SK-N-SH (cell line): ENCODE measurements at regions of chr17 and their contacts with region 1.

Region 1: DNA sequence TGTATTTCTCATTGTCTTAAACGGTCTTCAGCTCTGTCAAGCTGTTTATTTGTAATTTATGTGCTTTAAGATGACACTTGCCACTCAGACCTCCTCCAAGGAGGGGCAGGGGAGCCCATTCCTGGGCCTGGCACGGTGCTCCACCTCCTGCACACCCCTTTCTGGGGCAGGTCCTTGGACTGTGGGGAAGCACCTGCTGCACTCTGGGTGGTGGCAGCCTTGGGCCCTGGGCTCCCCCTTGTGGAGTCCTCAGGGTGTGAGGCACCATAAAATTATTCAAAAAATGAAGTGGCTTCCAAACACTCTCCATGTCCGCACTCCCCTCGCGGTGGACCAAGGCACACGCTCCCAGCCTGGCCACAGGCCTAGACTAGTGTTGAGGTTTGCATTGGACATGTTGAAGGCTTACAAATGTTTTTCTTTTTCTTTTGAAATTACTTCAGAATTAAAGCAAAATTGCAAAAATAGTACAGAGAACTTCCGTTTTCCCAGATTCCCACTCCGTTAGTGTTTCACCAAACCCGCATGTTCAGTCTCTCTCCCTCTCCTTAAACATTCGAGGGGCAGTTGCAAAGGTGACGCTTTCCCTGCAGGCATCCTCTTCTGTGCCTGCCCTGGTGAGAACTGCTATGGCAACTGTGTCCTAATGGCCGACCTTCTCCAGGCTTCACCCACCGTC is 32.4 kb downstream of the FOXK2 start:
- DNase-seq: peak; percentile 85
- H3K4me3 ChIP-seq: no peak overlapping the region
- H3K27ac ChIP-seq: no peak overlapping the region
- H3K4me1 ChIP-seq: peaks cover 14 to 19% of the 10 kb centered on the region in 2 experiments; a peak in 3 of 4 replicates
- H3K27me3 ChIP-seq: no peaks in the 10 kb centered on the region
- CTCF ChIP-seq: peak; percentile 76
- EP300 ChIP-seq: no peak
- RAD21 ChIP-seq: peak; percentile 77

Region 2: GRCh38 chr17:82494236-82495055 is 57.5 kb before region 1 on chr17:
- CTCF ChIA-PET with region 1: interaction called, 29 read pairs
- POLR2A ChIA-PET with region 1: no interaction called
- DNase-seq: peak; percentile 94
- H3K4me3 ChIP-seq: peak overlapping the region; percentile 22 to 57
- H3K27ac ChIP-seq: peak overlapping the region; percentile 50 to 76
- H3K4me1 ChIP-seq: peaks cover 8 to 21% of the 10 kb centered on the region in 2 experiments; a peak in 2 of 4 replicates
- H3K27me3 ChIP-seq: no peaks in the 10 kb centered on the region
- CTCF ChIP-seq: peak; percentile 100
- EP300 ChIP-seq: peak in 1 of 2 experiments; percentile 64; a peak in 1 of 4 replicates
- RAD21 ChIP-seq: peak; percentile 50

Region 3: GRCh38 chr17:82528484-82529265 is 23.2 kb before region 1 on chr17:
- CTCF ChIA-PET with region 1: interaction called, 35 read pairs
- POLR2A ChIA-PET with region 1: no interaction called
- DNase-seq: peak; percentile 88
- H3K4me3 ChIP-seq: no peak overlapping the region
- H3K27ac ChIP-seq: peak overlapping the region; percentile 47 to 63
- H3K4me1 ChIP-seq: peaks cover 25 to 34% of the 10 kb centered on the region in 2 experiments
- H3K27me3 ChIP-seq: no peaks in the 10 kb centered on the region
- CTCF ChIP-seq: peak; percentile 88
- EP300 ChIP-seq: no peak
- RAD21 ChIP-seq: peak; percentile 93

Region 4: DNA sequence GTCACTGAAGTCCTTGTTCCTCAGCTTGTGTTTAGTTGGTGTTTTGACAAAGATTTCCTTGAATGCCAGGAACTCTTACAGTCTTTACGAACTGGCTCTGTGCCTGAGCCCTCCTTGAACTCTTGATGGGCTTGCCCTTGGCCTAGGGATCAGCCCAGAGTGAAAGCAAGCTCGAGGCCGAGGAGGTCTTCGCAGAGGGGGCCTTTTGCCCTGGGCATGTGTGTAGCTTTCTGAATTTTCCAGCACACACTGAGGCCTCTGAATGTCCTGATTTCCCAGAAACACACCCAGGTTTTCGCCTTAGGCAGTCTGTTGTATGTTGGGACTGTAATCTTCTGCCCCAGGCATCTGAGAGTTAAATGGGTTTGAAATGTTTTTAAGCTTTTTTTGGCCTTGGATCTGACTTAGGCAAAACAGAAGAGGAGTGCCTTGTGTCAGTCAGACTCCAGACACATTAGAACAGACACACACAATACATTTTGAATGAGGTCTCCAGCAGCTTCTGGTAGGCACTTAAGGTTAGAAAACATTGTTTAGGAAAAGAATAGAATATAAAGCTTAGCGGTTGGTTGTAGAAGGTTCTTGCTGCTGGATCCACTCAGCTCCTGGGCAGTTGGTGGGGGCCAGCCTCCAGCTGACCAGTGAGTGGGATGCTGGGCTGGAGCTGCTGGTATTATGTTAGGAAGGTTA is 15.3 kb before region 1 on chr17:
- CTCF ChIA-PET with region 1: interaction called, 95 read pairs
- POLR2A ChIA-PET with region 1: no interaction called
- DNase-seq: peak; percentile 54
- H3K4me3 ChIP-seq: peak overlapping the region in 1 of 2 experiments; percentile 49; a peak in 2 of 4 replicates
- H3K27ac ChIP-seq: peak overlapping the region; percentile 87 to 97
- H3K4me1 ChIP-seq: peaks cover 28 to 38% of the 10 kb centered on the region in 2 experiments
- H3K27me3 ChIP-seq: no peaks in the 10 kb centered on the region
- CTCF ChIP-seq: no peak
- EP300 ChIP-seq: peak in 1 of 2 experiments; percentile 53; a peak in 2 of 4 replicates
- RAD21 ChIP-seq: no peak

Region 5: GRCh38 chr17:82565551-82565950 is 13.6 kb after region 1 on chr17:
- CTCF ChIA-PET with region 1: interaction called, 26 read pairs
- POLR2A ChIA-PET with region 1: no interaction called
- DNase-seq: no peak
- H3K4me3 ChIP-seq: no peak overlapping the region
- H3K27ac ChIP-seq: no peak overlapping the region
- H3K4me1 ChIP-seq: peaks cover 0 to 5% of the 10 kb centered on the region in 2 experiments; a peak in 2 of 4 replicates
- H3K27me3 ChIP-seq: no peaks in the 10 kb centered on the region
- CTCF ChIP-seq: no peak
- EP300 ChIP-seq: no peak
- RAD21 ChIP-seq: no peak

Region 6: DNA sequence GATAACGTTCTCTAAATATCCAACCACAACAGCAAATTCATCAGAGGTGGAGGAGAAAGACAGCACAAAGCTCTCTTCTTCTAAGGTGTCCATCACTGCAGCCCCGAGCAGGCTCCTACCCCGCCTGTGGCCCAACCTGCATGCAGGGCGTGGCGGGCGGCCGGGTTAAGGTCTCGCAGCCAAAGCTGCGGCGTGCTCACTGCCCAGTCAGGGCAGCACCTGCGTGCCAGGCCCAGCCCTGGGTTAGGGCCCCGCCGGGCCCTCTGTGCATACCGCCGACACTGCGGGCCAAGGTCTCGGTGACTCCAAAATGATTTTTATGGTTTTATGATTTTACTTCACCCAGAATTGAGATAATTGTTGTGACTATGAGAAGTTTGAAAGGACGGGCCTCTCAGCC is 25.4 kb after region 1 on chr17:
- CTCF ChIA-PET with region 1: interaction called, 10 read pairs
- POLR2A ChIA-PET with region 1: no interaction called
- DNase-seq: no peak
- H3K4me3 ChIP-seq: no peak overlapping the region
- H3K27ac ChIP-seq: no peak overlapping the region
- H3K4me1 ChIP-seq: peaks cover 0 to 9% of the 10 kb centered on the region in 2 experiments; a peak in 1 of 4 replicates
- H3K27me3 ChIP-seq: no peaks in the 10 kb centered on the region
- CTCF ChIP-seq: no peak
- EP300 ChIP-seq: no peak
- RAD21 ChIP-seq: no peak

Region 7: DNA sequence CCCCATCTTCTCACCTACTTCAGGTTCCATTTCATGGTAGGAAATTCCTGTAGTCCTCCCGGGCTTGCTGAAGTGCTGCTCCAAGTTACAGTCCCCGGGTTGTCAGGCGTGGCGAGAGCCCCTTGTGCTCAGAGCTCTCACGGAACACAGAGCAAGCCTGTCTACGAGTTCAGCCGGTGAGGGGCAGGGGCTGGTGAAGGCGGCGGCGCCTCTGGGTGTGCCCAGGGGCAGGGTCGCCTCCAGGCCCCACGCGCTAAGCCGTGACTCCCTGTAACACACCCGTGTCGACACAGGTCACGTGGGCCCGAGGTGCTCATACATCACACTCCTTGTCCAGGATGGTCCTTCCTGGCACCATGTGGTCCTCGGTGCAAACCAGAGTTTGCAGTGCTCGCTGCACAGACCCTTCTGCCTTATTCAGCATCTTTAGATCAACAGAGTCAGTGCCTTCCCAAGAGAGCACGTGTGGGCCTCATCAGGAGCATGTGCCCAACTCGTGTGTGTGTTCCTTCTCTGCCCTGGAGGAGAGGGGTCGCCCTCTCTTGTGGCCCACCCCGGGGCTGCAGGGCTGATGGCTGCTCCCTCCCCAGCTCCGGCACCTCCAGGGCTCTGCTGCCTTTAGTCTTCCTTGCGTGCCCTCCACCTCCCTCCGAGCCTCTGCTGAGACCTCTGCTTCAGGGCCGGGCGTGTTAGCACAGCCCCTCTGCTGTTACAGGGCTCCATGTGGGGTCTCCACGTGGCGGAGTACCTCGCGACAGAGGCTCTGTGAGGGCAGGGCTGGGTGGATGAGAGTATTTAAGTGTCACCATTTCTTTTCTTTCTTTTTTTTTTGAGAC is 45.1 kb after region 1 on chr17:
- CTCF ChIA-PET with region 1: no interaction called
- POLR2A ChIA-PET with region 1: no interaction called
- DNase-seq: peak; percentile 29
- H3K4me3 ChIP-seq: no peak overlapping the region
- H3K27ac ChIP-seq: no peak overlapping the region; a peak in 1 of 4 replicates
- H3K4me1 ChIP-seq: peaks cover 8 to 20% of the 10 kb centered on the region in 2 experiments; a peak in 2 of 4 replicates
- H3K27me3 ChIP-seq: no peaks in the 10 kb centered on the region
- CTCF ChIP-seq: no peak
- EP300 ChIP-seq: no peak
- RAD21 ChIP-seq: no peak